Activated CD4-positive, alpha-beta T cell treated with anti-CD3 and anti-CD28 coated beads for 36 hours (primary cell): ENCODE measurements at regions of chr14 and their contacts with region 1.

Region 1: DNA sequence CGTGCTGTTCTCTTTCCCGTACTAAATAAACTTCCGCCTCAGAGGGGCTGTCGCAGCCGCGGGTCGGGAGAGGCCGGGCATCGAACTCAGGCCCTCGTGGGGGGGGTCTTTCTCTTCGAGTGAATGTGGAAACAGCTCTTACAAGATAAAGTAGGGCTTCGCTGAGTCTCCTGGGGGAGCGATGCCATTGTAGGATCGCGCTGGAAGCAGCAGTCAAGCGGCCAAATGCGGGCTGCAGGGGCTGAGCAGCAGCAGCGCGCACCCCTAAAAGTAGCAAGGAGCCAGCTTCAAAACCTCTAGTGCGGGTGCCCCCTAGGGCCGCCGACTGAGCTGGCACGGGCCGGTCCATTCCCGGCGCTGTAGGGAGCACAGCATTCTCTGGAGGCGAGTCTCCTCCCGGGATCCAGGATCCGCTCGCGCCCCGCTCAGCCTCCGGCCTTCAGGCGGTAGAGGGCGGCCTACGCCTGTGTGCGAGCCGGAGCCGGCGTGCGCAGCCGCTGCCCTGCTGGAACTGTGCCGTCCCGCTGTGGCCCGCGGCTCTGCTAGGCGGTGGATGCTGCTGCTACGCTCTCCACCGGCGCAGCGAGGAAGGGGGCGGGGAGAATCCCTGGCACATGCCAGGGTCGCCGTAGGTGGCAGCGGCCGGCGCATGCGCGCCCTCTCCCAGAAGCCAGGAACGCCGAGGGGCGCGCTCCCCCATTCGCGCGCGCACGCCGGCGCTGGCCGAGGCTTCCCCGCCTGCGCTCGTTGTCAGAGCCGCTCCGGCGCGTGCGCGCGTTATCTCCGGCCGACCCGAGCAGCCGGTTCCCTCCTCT is at the start of gene FUT8:
- DNase-seq: peak; percentile 98
- ATAC-seq: peak; percentile 92
- H3K4me3 Mint-ChIP-seq: peak within 1 kb of the TSS; percentile 80
- H3K27ac Mint-ChIP-seq: peak within 1 kb of the TSS; percentile 88
- H3K4me1 Mint-ChIP-seq: peaks cover 31% of the 10 kb centered on the region
- H3K27me3 Mint-ChIP-seq: no peaks in the 10 kb centered on the region
- total RNA-seq, gene FUT8: 44.2 to 50.0 TPM

Region 2: DNA sequence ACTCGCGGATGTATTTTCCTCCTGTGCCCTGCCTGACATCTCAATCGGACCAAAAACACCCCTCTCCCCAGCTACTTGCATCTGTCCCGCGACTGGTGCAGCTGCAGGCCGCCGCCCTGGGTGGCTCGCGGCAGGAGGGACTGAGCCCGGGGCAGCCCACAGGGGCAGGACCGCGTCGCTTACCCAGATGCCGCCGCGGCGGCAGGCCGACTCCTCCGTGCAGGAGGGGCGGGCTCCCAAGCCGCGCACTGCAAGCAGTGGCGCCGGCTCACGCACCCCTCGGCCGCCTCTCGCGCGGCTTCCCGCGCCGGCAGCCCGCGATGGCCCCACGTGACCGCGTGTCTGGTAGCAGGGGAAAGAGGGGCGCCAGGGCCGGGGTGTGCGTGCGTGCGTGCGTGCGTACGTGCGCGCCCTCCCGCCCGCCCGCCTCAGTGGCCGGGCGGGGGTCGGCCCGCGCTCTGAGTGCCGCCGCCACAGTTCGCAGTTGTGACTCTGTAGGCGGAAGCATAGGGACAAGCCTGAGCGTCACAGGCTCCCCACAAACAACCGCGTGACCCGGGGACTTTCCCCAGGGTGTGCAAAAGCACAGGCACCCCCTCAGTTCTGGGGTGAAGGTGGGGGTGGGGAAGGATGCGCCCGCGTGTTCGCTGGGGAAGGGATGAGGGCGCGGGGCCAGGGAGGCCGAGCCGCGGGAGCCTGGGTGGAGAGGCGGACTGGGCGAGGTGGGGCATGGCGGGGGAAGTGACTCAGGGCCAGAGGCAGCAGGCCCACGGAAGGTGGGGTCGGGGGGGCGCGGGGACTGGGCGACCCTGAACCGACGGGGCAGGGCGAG is 908.5 kb before region 1 on chr14 and contains the start of gene ZBTB25:
- CTCF ChIA-PET with region 1: no interaction called
- POLR2A ChIA-PET with region 1: no interaction called
- intact Hi-C with region 1: loop called in 1 of 2 experiments (anchors 5 kb)
- DNase-seq: peak; percentile 97
- ATAC-seq: peak; percentile 66
- H3K4me3 Mint-ChIP-seq: peak within 1 kb of the TSS; percentile 98
- H3K27ac Mint-ChIP-seq: peak within 1 kb of the TSS; percentile 99
- H3K4me1 Mint-ChIP-seq: peaks cover 51% of the 10 kb centered on the region
- H3K27me3 Mint-ChIP-seq: no peaks in the 10 kb centered on the region
- total RNA-seq, gene ZBTB25: 32.7 to 40.0 TPM

Region 3: DNA sequence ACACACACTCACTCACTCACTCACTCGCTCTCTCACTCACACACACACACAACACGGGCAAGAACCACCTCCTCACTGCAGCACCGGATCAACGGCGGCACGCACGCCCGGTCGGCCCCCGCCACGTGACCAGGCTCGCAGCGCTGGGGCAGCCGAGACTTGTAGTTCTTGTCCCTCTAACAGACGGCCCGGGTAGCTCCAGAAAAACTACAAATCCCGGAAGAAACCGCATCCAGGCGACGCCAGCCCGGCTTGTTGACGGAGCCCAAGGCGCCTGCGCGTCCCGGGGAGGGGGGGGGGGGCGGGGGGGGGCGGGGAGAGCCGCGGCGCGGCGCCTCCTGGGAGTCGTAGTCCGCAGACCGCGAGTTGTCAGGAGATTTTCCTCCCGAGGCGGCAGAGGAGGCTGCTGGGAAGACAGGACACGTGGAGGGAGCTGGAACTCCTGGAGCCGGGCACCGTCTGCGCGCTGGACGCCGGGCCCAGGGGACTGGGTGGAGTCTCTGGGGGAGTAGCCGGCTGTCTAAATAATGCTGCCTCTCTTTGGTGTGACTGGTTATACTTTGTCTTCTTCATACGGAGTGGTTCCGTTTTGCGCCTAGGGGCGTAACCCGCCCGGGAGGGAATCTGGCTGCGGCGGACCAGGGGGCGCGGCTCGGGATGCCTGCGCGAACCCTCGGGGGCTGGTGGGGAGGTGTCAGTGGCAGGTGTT is 309.6 kb before region 1 on chr14 and contains the start of gene MAX:
- CTCF ChIA-PET with region 1: interaction called, 3 read pairs
- POLR2A ChIA-PET with region 1: no interaction called
- intact Hi-C with region 1: loop called (anchors 1 kb)
- DNase-seq: peak; percentile 99
- ATAC-seq: peak; percentile 95
- H3K4me3 Mint-ChIP-seq: peak within 1 kb of the TSS; percentile 89
- H3K27ac Mint-ChIP-seq: peak within 1 kb of the TSS; percentile 96
- H3K4me1 Mint-ChIP-seq: peaks cover 40% of the 10 kb centered on the region
- H3K27me3 Mint-ChIP-seq: peaks cover 2% of the 10 kb centered on the region
- total RNA-seq, gene MAX: 93.6 to 136 TPM

Region 4: GRCh38 chr14:65222440-65222858 is 189.8 kb before region 1 on chr14:
- CTCF ChIA-PET with region 1: interaction called, 4 read pairs
- POLR2A ChIA-PET with region 1: interaction called, 3 read pairs
- intact Hi-C with region 1: loop called (anchors 1 to 2 kb)
- DNase-seq: peak; percentile 78
- ATAC-seq: peak; percentile 96
- H3K4me3 Mint-ChIP-seq: no peak overlapping the region
- H3K27ac Mint-ChIP-seq: peak overlapping the region; percentile 51
- H3K4me1 Mint-ChIP-seq: peaks cover 32% of the 10 kb centered on the region
- H3K27me3 Mint-ChIP-seq: no peaks in the 10 kb centered on the region

Region 5: DNA sequence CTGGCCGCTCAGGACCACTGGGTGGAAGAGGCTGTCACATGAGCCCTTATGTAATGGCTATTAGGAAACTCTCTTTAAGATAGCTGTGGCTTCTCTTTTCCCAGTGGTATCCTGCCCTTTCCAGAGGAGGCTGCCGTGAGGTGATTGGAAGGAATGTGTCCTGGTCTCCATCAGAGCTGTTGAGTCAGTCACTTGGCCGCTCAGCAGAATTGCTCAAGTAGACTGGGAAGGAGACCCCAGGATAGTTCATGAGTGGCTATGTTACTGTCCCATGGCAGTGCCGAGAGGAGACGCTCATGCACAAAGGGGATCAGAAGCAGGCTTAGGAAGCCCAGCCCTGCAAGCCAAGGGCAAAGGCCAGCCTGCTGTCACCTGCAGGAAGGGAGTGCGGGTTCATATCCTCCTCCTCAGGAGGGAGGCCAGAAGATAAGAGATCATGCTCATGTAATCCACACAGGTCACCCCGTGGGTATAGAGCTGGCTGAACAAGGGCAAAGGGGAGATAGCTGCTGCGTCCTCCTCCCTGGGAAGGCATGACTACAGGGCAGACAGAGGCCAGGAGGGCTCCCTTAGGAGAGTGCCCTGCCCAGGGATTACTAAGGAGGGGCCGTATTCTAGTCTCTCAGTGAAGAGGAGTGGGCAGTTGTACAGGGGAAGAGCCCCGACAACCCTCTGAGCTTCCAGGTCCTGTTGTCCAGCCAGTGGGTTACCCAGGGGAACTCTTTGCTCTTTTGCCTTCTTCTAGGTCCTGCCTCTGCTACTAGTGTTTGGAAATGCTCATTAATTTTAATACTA is 172.9 kb before region 1 on chr14:
- CTCF ChIA-PET with region 1: no interaction called
- POLR2A ChIA-PET with region 1: no interaction called
- intact Hi-C with region 1: no loop called
- DNase-seq: no peak
- ATAC-seq: no peak
- H3K4me3 Mint-ChIP-seq: no peak overlapping the region
- H3K27ac Mint-ChIP-seq: no peak overlapping the region
- H3K4me1 Mint-ChIP-seq: peaks cover 4% of the 10 kb centered on the region
- H3K27me3 Mint-ChIP-seq: no peaks in the 10 kb centered on the region

Region 6: GRCh38 chr14:65336191-65336591 is 76.0 kb before region 1 on chr14:
- CTCF ChIA-PET with region 1: interaction called, 3 read pairs
- POLR2A ChIA-PET with region 1: interaction called, 3 read pairs
- intact Hi-C with region 1: loop called in 1 of 2 experiments (anchors 1 kb)
- DNase-seq: peak; percentile 72
- ATAC-seq: peak; percentile 89
- H3K4me3 Mint-ChIP-seq: peak overlapping the region; percentile 74
- H3K27ac Mint-ChIP-seq: peak overlapping the region; percentile 95
- H3K4me1 Mint-ChIP-seq: peaks cover 55% of the 10 kb centered on the region
- H3K27me3 Mint-ChIP-seq: no peaks in the 10 kb centered on the region

Region 7: DNA sequence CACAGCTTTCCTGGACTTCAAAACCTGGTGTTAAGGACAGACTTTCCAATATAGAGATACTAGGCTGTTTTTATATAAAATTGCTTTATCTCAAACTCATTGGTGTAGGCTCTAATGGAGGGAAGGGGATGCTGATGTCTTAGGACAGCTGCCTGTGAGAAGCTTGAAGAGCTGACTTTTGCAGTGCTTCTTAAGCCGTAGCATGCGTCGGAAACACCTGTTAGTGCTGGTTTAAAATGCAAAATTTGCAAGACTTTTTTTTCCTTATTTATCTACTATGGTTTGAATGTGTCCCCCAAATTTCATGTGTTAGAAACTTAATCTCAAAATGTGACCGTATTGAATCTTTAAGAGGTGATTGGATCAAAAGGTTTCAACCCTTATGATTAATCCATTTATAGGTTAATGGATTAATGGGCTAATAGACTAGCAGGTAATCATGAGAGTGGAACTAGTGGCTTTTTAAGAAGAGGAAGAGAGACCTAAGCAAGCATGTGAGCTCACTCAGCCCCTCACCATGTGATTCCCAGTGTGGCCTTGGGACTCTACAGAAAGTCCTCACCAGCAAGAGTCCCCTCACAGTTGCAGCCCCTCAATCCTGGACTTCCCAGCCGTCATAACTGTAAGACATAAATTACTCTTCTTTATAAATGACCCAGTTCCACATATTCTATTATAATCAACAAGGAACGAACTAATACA is 60.6 kb before region 1 on chr14:
- CTCF ChIA-PET with region 1: no interaction called
- POLR2A ChIA-PET with region 1: no interaction called
- intact Hi-C with region 1: no loop called
- DNase-seq: no peak
- ATAC-seq: no peak
- H3K4me3 Mint-ChIP-seq: no peak overlapping the region
- H3K27ac Mint-ChIP-seq: no peak overlapping the region
- H3K4me1 Mint-ChIP-seq: peaks cover 23% of the 10 kb centered on the region
- H3K27me3 Mint-ChIP-seq: no peaks in the 10 kb centered on the region

Region 8: DNA sequence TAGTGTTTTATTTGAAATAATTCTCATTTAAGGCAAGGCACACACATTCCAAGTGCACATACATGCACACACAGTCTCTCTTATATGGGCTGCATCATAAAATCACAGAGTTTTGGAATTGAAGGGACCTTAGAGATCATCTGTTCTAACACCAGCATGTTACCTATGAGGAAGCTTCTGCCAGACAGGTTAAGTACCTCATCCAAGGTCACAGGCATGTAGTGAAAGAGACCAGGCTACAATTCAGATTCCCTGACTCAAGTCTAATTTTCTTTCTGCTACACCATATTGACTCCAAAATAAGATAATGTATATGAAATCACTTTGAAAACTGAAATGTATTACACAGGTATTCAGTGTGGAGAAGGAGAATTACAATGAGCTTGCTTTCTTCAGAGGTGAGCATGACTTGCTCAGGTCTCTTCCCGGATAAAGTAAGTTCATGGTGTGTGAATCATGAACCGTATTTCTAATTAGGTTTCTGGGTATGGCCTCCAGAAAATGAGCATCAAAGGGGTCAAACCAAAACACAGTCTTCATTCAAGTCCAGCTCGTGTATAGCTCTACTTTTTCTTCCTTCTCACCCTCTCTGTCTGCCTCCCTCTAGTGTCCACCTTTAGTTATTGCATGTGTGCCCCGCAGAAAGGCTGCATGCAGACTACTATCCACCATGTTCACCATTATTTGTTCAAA is 412.2 kb after region 1 on chr14:
- CTCF ChIA-PET with region 1: interaction called, 58 read pairs
- POLR2A ChIA-PET with region 1: no interaction called
- intact Hi-C with region 1: loop called (anchors 1 kb)
- DNase-seq: peak; percentile 70
- ATAC-seq: peak; percentile 80
- H3K4me3 Mint-ChIP-seq: no peak overlapping the region
- H3K27ac Mint-ChIP-seq: no peak overlapping the region
- H3K4me1 Mint-ChIP-seq: peaks cover 7% of the 10 kb centered on the region
- H3K27me3 Mint-ChIP-seq: no peaks in the 10 kb centered on the region